H1 (cell line): ENCODE measurements at regions of chr2 and their contacts with region 1.

Region 1: GRCh38 chr2:101036562-101037457 is 34.7 kb downstream of the RPL31 start:
- DNase-seq: no peak
- H3K4me3 ChIP-seq: no peak overlapping the region
- H3K27ac ChIP-seq: no peak overlapping the region
- H3K4me1 ChIP-seq: no peaks in the 10 kb centered on the region; a peak in 1 of 7 replicates
- H3K27me3 ChIP-seq: no peaks in the 10 kb centered on the region
- CTCF ChIP-seq: peak in 2 of 3 experiments; percentile 19 to 29; a peak in 2 of 4 replicates
- EP300 ChIP-seq: no peak
- POLR2A ChIP-seq: no peak
- RAD21 ChIP-seq: peak; percentile 42 to 55; a peak in 3 of 4 replicates

Region 2: GRCh38 chr2:101001691-101002561 is 34.9 kb before region 1 on chr2 and contains the start of gene RPL31:
- CTCF ChIA-PET with region 1: interaction called, 5 read pairs
- POLR2A ChIA-PET with region 1: interaction called, 24 read pairs
- DNase-seq: peak; percentile 91 to 96
- H3K4me3 ChIP-seq: peak within 1 kb of the TSS; percentile 88 to 99 (median 94)
- H3K27ac ChIP-seq: peak within 1 kb of the TSS; percentile 91
- H3K4me1 ChIP-seq: peaks cover 5 to 10% (median 8%) of the 10 kb centered on the region in 4 experiments; a peak in 6 of 7 replicates
- H3K27me3 ChIP-seq: peaks cover 0 to 7% (median 2%) of the 10 kb centered on the region in 4 experiments; a peak in 3 of 7 replicates
- CTCF ChIP-seq: no peak; a peak in 1 of 4 replicates
- EP300 ChIP-seq: no peak
- POLR2A ChIP-seq: peak; percentile 86 to 99
- RAD21 ChIP-seq: no peak
- total RNA-seq, gene RPL31: 1,722 and 1,734 TPM in 2 replicates

Region 3: DNA sequence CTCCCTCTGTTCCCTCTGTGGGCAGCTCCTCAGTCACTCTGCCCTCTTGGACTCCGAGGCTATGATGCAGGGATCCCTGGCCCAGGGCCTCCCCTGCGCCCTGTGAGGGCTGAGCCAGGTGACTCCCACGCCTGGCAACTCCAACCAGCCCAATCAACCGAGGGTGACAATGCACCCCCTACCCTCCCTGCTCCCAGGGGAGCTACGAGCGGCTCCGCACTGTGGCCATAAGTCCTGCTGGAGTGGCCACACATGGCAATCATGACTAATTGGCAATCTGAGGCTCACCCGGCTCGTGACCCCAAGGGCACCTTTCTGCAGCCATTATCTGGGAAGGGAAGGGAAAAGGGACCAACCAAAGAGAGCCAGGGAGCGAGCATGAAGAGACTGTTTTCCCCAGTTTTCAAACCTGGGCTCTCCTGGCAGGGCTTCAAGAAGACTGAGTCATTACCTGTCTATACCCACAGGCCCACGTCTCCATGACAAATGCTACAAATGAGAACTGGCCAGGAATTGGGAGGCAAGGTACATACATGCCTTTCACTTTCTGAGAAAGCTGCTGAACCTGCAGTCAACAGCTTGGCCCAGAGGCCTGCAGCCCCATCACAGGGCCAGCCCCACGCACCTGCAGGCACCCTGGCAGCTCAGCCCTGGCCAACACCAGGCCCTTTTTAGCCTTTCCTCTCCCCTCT is 10.4 kb after region 1 on chr2:
- CTCF ChIA-PET with region 1: interaction called, 31 read pairs
- POLR2A ChIA-PET with region 1: no interaction called
- DNase-seq: no peak
- H3K4me3 ChIP-seq: no peak overlapping the region
- H3K27ac ChIP-seq: no peak overlapping the region
- H3K4me1 ChIP-seq: peaks cover 0 to 7% (median 1%) of the 10 kb centered on the region in 4 experiments; a peak in 4 of 7 replicates
- H3K27me3 ChIP-seq: no peaks in the 10 kb centered on the region
- CTCF ChIP-seq: no peak
- EP300 ChIP-seq: no peak
- POLR2A ChIP-seq: no peak
- RAD21 ChIP-seq: no peak

Region 4: DNA sequence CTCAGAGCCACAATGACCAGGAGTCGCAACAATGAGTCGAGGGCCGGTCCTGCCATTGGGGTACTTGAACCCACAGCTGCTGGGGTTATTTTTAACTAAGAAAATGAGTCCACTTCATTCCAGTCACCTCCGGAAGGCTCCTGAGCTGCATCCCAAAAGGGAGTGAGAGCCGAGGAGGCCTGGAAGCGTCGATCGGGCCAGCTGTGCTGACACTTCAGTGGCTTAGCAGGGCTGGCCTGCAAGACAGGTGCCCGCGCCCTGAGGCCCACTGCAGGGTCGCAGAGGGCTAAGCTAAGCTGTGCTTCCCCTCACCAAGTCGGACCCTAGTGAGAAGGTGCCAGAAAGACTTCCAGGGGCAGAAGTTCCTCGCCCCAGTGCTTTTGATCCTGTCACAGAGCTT is 93.3 kb after region 1 on chr2:
- CTCF ChIA-PET with region 1: interaction called, 10 read pairs
- POLR2A ChIA-PET with region 1: no interaction called
- DNase-seq: no peak
- H3K4me3 ChIP-seq: no peak overlapping the region
- H3K27ac ChIP-seq: no peak overlapping the region
- H3K4me1 ChIP-seq: peaks cover 0 to 2% (median 0%) of the 10 kb centered on the region in 4 experiments; a peak in 2 of 7 replicates
- H3K27me3 ChIP-seq: no peaks in the 10 kb centered on the region
- CTCF ChIP-seq: no peak
- EP300 ChIP-seq: no peak
- POLR2A ChIP-seq: no peak
- RAD21 ChIP-seq: no peak

Region 5: GRCh38 chr2:101160454-101160853 is 123.6 kb after region 1 on chr2:
- CTCF ChIA-PET with region 1: interaction called, 21 read pairs
- POLR2A ChIA-PET with region 1: interaction called, 4 read pairs
- DNase-seq: no peak
- H3K4me3 ChIP-seq: no peak overlapping the region
- H3K27ac ChIP-seq: no peak overlapping the region
- H3K4me1 ChIP-seq: peaks cover 1 to 12% (median 2%) of the 10 kb centered on the region in 4 experiments; a peak in 5 of 7 replicates
- H3K27me3 ChIP-seq: no peaks in the 10 kb centered on the region
- CTCF ChIP-seq: no peak
- EP300 ChIP-seq: no peak
- POLR2A ChIP-seq: no peak
- RAD21 ChIP-seq: no peak

Region 6: DNA sequence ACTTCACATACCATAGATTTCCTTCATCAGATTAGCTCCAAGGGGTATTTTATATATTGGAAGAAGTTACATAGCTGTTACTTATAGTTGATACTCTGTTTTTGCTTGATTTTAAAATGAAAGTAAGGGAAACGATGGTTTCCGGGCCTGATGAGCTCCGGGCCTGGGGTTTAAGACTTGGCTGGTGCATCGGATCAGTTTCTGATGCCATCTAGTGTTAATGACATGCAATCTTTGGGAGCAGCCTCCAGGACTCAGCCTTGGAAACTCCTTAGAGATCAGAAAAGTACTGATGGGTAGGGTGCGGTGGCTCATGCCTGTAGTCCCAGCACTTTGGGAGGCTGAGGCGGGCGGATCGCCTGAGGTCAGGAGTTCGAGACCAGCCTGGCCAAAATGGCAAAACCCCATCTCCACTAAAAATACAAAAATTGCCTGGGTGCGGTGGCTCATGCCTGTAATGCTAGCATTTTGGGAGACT is 168.8 kb after region 1 on chr2:
- CTCF ChIA-PET with region 1: interaction called, 32 read pairs
- POLR2A ChIA-PET with region 1: no interaction called
- DNase-seq: peak; percentile 19 to 52
- H3K4me3 ChIP-seq: no peak overlapping the region
- H3K27ac ChIP-seq: no peak overlapping the region
- H3K4me1 ChIP-seq: no peaks in the 10 kb centered on the region
- H3K27me3 ChIP-seq: no peaks in the 10 kb centered on the region
- CTCF ChIP-seq: peak; percentile 26 to 66 (median 62)
- EP300 ChIP-seq: no peak
- POLR2A ChIP-seq: no peak
- RAD21 ChIP-seq: peak; percentile 69 to 84